Ovary (tissue), 10 donors: ENCODE measurements at regions of chr9 and their contacts with region 1.

Region 1: GRCh38 chr9:3920604-3921582 is 379.0 kb downstream of the GLIS3 start:
- DNase-seq: no peak
- H3K4me3 ChIP-seq: no peak overlapping the region
- H3K27ac ChIP-seq: no peak overlapping the region
- H3K4me1 ChIP-seq: no peaks in the 10 kb centered on the region
- H3K27me3 ChIP-seq: no peaks in the 10 kb centered on the region
- CTCF ChIP-seq: no peak
- EP300 ChIP-seq: no peak
- POLR2A ChIP-seq: no peak

Region 2: GRCh38 chr9:3980771-3981170 is 59.9 kb after region 1 on chr9:
- intact Hi-C with region 1: loop called in 1 of 4 experiments (anchors 10 kb)
- DNase-seq: peak; percentile 35 to 61 (median 53)
- H3K4me3 ChIP-seq: no peak overlapping the region
- H3K27ac ChIP-seq: no peak overlapping the region
- H3K4me1 ChIP-seq: peaks cover 8% of the 10 kb centered on the region
- H3K27me3 ChIP-seq: no peaks in the 10 kb centered on the region
- CTCF ChIP-seq: no peak
- EP300 ChIP-seq: no peak
- POLR2A ChIP-seq: no peak